Heart right ventricle (tissue), 16 donors: ENCODE measurements at regions of chr2 and their contacts with region 1.

Region 1: DNA sequence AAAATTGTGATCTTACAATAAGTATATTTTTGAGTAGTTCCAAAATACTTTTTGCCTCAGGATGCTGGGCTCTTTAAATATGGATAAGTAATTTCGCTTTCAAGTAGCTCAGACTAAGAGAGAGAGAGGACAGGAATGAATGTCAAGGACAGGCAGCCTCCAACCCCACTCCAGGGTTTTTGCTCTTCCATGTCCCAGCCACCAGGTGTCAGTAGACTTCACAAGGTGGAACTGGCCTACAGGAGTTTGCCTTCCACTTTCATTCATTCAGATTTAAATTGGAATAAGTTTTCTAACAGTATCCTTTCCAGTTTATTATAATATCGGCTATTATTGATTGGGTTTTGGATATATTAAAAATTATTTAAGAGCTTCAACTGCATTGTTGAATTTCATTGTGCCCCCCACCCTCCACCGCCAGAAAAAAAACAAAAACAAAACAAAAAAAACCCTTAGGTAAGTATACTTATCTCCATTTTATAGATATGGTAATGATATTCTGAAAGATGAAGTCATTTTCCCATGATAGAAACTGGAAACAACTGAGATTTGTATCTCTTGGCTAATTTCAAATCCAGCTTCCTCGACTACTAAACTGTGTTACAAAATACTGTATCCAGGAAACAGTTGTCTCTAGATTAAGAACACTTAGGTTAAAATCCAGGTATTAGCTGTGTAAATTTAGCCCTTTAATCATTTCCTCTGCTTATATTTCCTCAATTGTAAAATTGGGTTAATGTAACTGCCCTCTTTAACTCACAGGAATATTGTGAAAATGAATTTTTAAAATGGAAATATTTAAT is 793.1 kb downstream of the ERBB4 start:
- DNase-seq: peak in 1 of 2 donors; percentile 32
- ATAC-seq: peak; percentile 72 to 88 (median 82)
- H3K4me3 ChIP-seq: no peak overlapping the region
- H3K27ac ChIP-seq: no peak overlapping the region
- H3K4me1 ChIP-seq: peaks cover 0 to 7% (median 0%) of the 10 kb centered on the region in 9 donors
- H3K27me3 ChIP-seq: no peaks in the 10 kb centered on the region
- CTCF ChIP-seq: peak; percentile 50 to 86 (median 84)

Region 2: DNA sequence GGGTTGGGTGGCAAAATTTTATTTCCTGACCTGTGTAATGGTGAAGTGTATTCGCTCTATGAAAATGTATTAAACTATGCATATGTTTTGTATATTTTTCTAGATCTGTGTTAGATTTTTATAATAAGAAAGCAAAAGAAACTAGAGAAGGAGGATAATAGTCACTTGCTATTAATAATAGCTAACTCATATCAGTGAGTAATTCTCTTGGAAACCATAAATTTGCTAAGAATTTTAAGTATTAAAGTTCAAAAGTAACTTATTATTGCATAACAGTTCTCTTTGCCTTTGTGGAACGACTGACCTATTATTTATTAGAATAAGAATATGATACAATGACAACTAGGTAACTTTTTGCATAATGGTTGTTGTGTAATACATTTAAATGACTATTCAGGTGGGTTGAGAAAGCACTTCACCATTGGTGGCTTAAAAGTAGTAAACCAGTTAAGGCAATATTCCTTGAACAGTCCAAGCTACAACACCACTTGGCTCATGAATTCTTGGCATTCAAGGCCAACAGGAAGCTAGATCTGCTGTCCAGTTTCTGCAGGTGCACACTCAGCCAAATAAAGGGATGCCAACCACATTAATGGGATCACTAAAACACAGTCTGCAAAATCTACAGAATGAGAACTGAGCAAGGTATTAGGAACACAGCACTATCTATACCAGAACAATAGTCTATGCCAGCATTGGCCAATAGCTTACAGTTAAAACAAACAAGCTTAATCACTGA is 267.8 kb before region 1 on chr2:
- intact Hi-C with region 1: no loop called
- DNase-seq: no peak
- ATAC-seq: no peak
- H3K4me3 ChIP-seq: no peak overlapping the region
- H3K27ac ChIP-seq: no peak overlapping the region
- H3K4me1 ChIP-seq: no peaks in the 10 kb centered on the region
- H3K27me3 ChIP-seq: no peaks in the 10 kb centered on the region
- CTCF ChIP-seq: no peak

Region 3: DNA sequence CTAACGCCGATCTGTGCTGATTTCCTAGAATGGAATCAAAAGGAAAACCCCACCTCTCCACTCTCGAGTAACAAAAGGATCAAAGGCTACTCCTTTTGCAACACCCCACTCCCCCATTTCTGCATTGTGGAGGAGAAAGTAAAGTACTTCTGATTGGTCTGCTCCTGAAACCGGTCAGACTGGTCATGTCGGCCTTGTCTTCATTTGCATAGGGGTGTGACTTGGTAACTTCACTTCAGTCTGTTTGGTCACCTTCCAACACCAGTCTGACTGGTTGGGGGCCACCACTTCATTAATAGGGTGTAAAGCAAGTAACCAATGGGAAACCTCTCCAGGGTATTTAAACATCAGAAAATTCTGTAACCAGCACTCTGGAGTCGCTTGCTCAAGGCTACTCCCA is 21.2 kb after region 1 on chr2:
- intact Hi-C with region 1: loop called in 1 of 10 experiments (anchors 1 kb)
- DNase-seq: no peak
- ATAC-seq: no peak
- H3K4me3 ChIP-seq: no peak overlapping the region
- H3K27ac ChIP-seq: no peak overlapping the region
- H3K4me1 ChIP-seq: no peaks in the 10 kb centered on the region
- H3K27me3 ChIP-seq: no peaks in the 10 kb centered on the region
- CTCF ChIP-seq: no peak

Region 4: DNA sequence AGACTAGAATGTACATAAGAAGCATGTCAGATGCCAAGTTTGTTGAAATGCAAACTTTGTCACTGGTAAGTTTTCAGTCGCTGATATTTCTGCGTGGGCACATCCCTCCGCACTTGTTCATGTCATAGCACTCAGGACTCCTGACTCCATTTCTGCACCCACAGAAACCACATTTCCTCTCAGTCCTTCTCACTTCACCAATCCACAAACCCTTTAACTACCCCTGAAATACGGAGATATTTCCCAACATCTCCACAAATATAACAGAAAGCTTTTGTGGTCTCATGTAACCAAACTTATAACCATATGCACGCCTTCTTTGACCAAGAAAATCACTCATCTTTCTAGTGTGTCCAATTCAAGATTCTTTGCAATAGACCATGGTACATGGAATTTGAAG is 1070.0 kb after region 1 on chr2:
- intact Hi-C with region 1: no loop called
- DNase-seq: no peak
- ATAC-seq: no peak
- H3K4me3 ChIP-seq: no peak overlapping the region
- H3K27ac ChIP-seq: no peak overlapping the region
- H3K4me1 ChIP-seq: no peaks in the 10 kb centered on the region
- H3K27me3 ChIP-seq: no peaks in the 10 kb centered on the region
- CTCF ChIP-seq: no peak